ENCODE measurements at regions of chr22 and their contacts with region 1.

Region 1: DNA sequence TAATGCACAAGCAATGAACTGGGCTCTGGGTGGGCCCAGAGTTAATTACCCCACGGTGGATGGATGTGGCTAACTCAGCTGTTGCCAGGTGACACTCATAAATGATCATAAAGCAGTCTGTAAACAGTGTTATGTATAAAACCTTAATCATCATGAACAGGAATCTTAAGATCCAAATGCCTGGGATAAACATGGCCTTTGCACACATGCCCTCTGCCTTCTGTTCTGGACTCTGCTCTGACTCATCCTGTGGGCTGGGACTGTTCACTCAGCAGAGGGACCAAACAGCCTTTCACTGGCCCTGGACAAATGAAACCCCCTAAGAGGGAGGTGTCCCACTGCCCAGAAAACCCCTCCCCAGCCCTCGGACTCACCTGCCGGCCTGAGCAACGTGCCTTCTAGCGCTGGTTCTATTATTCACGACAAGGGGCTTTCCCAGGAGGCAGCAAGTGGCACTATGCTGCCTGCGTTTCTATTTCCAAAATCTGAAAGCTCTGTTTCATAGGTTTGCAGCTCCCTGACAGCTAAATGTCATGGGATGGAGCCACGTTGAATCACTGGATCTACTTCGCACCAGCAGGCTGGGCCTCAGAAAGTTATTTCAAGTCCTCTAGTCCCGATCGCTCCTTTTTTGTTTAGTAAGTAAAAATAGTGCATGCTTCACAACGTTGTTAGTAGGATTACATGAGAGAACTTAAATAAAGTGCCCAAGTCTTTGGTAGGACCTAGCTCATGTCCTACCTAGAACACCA is 53.0 kb downstream of the LARGE1 start:
- DNase-seq: peak; percentile 46 to 76
- H3K4me3 ChIP-seq: no peak overlapping the region
- H3K27ac ChIP-seq: peak overlapping the region; percentile 57
- H3K4me1 ChIP-seq: peaks cover 8% of the 10 kb centered on the region; the same call in 1 of the 2 replicates
- H3K27me3 ChIP-seq: no peaks in the 10 kb centered on the region; the same call in 1 of the 2 replicates
- CTCF ChIP-seq: no peak

Region 2: DNA sequence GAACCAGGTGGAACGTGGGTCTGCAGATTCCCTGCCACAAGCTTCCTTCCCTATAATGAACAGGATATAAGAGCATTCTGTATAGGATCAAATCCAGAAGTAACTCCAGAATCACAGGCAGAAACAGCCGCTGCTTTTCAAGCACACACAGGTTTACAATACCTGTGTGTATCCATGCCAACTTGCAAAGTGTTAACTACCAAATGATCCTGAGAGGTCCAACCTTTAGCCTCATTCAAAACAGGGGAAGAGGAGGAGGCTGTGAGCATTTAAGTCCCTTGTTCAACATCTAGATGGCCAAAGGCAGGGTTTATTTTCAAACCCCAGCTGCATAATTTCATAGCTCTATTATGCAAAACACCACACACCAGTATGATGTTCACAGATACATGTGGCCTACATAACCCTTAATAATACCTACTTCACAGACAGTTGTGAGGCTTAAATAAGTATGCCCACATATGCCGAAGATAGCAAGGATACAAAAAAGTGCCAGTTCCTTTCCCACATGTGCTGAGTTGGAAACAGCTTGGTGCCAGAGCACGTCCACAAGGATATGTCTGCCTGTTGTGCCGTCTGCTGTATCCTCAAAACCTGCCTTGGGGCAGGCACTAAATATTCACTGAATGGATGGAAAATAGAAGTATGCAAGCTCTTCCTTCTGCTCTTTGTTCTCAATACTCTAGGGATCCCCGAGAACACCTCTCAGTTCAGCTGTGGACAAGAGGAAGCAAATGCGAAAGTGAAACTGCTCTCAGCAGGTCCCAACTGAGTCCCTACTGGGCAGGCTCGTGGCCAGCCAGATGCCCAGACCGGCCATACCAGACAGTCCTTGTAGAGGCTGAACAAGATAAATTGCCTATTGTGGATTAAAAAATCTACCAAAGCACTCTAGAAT is 13.8 kb before region 1 on chr22:
- CTCF ChIA-PET with region 1: interaction called, 3 read pairs
- POLR2A ChIA-PET with region 1: interaction called, 10 read pairs
- intact Hi-C with region 1: no loop called
- DNase-seq: peak; percentile 68
- H3K4me3 ChIP-seq: peak overlapping the region; percentile 64
- H3K27ac ChIP-seq: peak overlapping the region; percentile 55
- H3K4me1 ChIP-seq: peaks cover 32% of the 10 kb centered on the region
- H3K27me3 ChIP-seq: no peaks in the 10 kb centered on the region
- CTCF ChIP-seq: no peak

Measured in PC-9 (cell line).